ENCODE measurements at regions of chr5 and their contacts with region 1.

Region 1: GRCh38 chr5:57137401-57137800 is 36.5 kb upstream of the GPBP1 start:
- DNase-seq: no peak
- ATAC-seq: no peak
- H3K4me3 ChIP-seq: no peak overlapping the region
- H3K27ac ChIP-seq: no peak overlapping the region
- H3K4me1 ChIP-seq: peaks cover 0 to 6% (median 0%) of the 10 kb centered on the region in 4 donors
- H3K27me3 ChIP-seq: no peaks in the 10 kb centered on the region
- CTCF ChIP-seq: no peak
- POLR2A ChIP-seq: no peak

Region 2: DNA sequence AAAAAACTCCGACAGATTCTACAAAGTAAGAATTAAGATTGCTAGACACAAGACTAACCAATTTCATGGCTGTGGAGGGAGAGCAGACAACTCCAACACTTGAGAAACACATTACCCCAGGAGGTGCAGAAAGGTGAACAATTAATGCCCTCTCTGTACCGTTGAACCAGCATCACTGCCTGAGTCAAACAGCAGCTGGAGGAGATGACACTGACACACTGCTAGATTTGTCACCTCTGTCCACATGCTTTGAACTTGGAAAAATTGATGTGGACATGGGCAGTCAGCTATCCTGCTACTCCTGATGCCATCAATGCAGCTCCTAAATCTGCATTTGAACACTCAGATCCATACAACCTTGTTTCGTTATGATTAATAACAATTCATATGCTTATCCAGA is 88.2 kb after region 1 on chr5:
- intact Hi-C with region 1: loop called in 1 of 2 experiments (anchors 5 kb)
- DNase-seq: no peak
- ATAC-seq: no peak
- H3K4me3 ChIP-seq: no peak overlapping the region
- H3K27ac ChIP-seq: no peak overlapping the region
- H3K4me1 ChIP-seq: peaks cover 0 to 6% (median 3%) of the 10 kb centered on the region in 4 donors
- H3K27me3 ChIP-seq: no peaks in the 10 kb centered on the region
- CTCF ChIP-seq: no peak
- POLR2A ChIP-seq: no peak

Measured in right lobe of liver (tissue), 6 donors.